Panc1 (cell line): ENCODE measurements at regions of chr17 and their contacts with region 1.

Region 1: GRCh38 chr17:74305865-74306654 is 20.0 kb upstream of the KIF19 start:
- DNase-seq: no peak
- ATAC-seq: peak; percentile 56
- H3K4me3 ChIP-seq: no peak overlapping the region
- H3K27ac ChIP-seq: no peak overlapping the region
- H3K4me1 ChIP-seq: no peaks in the 10 kb centered on the region
- H3K27me3 ChIP-seq: no peaks in the 10 kb centered on the region
- CTCF ChIP-seq: no peak

Region 2: DNA sequence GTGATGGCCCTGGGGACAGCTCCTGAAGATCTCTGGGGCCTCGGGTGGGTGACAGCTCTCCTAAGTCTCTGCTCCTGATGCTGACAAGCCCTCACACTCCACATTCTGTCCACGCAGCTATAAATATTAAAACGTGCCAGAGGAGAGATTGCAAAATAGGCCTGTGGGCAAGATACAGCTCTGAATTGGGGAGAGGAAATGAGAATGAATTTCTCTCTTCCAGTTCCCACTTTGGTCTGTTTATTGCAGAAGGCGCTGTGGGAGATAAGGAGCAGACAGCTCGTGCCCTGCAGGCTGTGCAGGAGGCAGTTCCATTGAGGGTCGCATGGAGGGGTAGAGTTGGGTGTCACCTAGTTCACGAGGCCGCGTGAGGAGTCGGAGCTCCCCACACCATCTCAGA is 574.3 kb before region 1 on chr17:
- CTCF ChIA-PET with region 1: no interaction called
- POLR2A ChIA-PET with region 1: interaction called, 11 read pairs
- in situ Hi-C with region 1: no loop called
- intact Hi-C with region 1: no loop called
- DNase-seq: no peak
- ATAC-seq: no peak
- H3K4me3 ChIP-seq: no peak overlapping the region
- H3K27ac ChIP-seq: no peak overlapping the region
- H3K4me1 ChIP-seq: no peaks in the 10 kb centered on the region
- H3K27me3 ChIP-seq: peaks cover 23% of the 10 kb centered on the region
- CTCF ChIP-seq: no peak

Region 3: GRCh38 chr17:74055508-74056160 is 250.4 kb before region 1 on chr17:
- CTCF ChIA-PET with region 1: no interaction called
- POLR2A ChIA-PET with region 1: no interaction called
- in situ Hi-C with region 1: no loop called
- intact Hi-C with region 1: no loop called
- DNase-seq: no peak
- ATAC-seq: no peak
- H3K4me3 ChIP-seq: no peak overlapping the region
- H3K27ac ChIP-seq: no peak overlapping the region
- H3K4me1 ChIP-seq: no peaks in the 10 kb centered on the region
- H3K27me3 ChIP-seq: peaks cover 31% of the 10 kb centered on the region
- CTCF ChIP-seq: no peak

Region 4: GRCh38 chr17:74280093-74280513 is 26.0 kb before region 1 on chr17:
- CTCF ChIA-PET with region 1: no interaction called
- POLR2A ChIA-PET with region 1: no interaction called
- in situ Hi-C with region 1: no loop called
- intact Hi-C with region 1: no loop called
- DNase-seq: no peak
- ATAC-seq: no peak
- H3K4me3 ChIP-seq: no peak overlapping the region
- H3K27ac ChIP-seq: no peak overlapping the region
- H3K4me1 ChIP-seq: no peaks in the 10 kb centered on the region; the same call in 1 of the 2 replicates
- H3K27me3 ChIP-seq: no peaks in the 10 kb centered on the region
- CTCF ChIP-seq: no peak

Region 5: GRCh38 chr17:74325743-74326379 is 19.8 kb after region 1 on chr17 and contains the start of gene KIF19:
- CTCF ChIA-PET with region 1: interaction called, 21 read pairs
- POLR2A ChIA-PET with region 1: no interaction called
- in situ Hi-C with region 1: no loop called
- intact Hi-C with region 1: no loop called
- DNase-seq: no peak
- ATAC-seq: peak; percentile 31; the same call in 1 of the 2 replicates
- H3K4me3 ChIP-seq: no peak within 1 kb of the TSS
- H3K27ac ChIP-seq: no peak within 1 kb of the TSS
- H3K4me1 ChIP-seq: no peaks in the 10 kb centered on the region
- H3K27me3 ChIP-seq: no peaks in the 10 kb centered on the region; the same call in 1 of the 2 replicates
- CTCF ChIP-seq: no peak
- total RNA-seq, gene KIF19: not detected

Region 6: GRCh38 chr17:74354123-74354522 is 48.1 kb after region 1 on chr17:
- CTCF ChIA-PET with region 1: interaction called, 4 read pairs
- POLR2A ChIA-PET with region 1: no interaction called
- in situ Hi-C with region 1: no loop called
- intact Hi-C with region 1: loop called (anchors 5 kb)
- DNase-seq: peak; percentile 22
- ATAC-seq: peak; percentile 81
- H3K4me3 ChIP-seq: no peak overlapping the region
- H3K27ac ChIP-seq: no peak overlapping the region
- H3K4me1 ChIP-seq: no peaks in the 10 kb centered on the region; the same call in 1 of the 2 replicates
- H3K27me3 ChIP-seq: peaks cover 11% of the 10 kb centered on the region
- CTCF ChIP-seq: peak; percentile 98

Region 7: GRCh38 chr17:74527081-74527480 is 221.0 kb after region 1 on chr17:
- CTCF ChIA-PET with region 1: interaction called, 14 read pairs
- POLR2A ChIA-PET with region 1: no interaction called
- in situ Hi-C with region 1: no loop called
- intact Hi-C with region 1: no loop called
- DNase-seq: no peak
- ATAC-seq: no peak
- H3K4me3 ChIP-seq: no peak overlapping the region
- H3K27ac ChIP-seq: no peak overlapping the region
- H3K4me1 ChIP-seq: no peaks in the 10 kb centered on the region
- H3K27me3 ChIP-seq: peaks cover 16% of the 10 kb centered on the region
- CTCF ChIP-seq: no peak

Region 8: GRCh38 chr17:74659898-74660297 is 353.8 kb after region 1 on chr17:
- CTCF ChIA-PET with region 1: no interaction called
- POLR2A ChIA-PET with region 1: no interaction called
- in situ Hi-C with region 1: no loop called
- intact Hi-C with region 1: no loop called
- DNase-seq: no peak
- ATAC-seq: no peak
- H3K4me3 ChIP-seq: no peak overlapping the region
- H3K27ac ChIP-seq: no peak overlapping the region
- H3K4me1 ChIP-seq: no peaks in the 10 kb centered on the region
- H3K27me3 ChIP-seq: peaks cover 36% of the 10 kb centered on the region
- CTCF ChIP-seq: no peak